ENCODE measurements at regions of chr20 and their contacts with region 1.

Region 1: DNA sequence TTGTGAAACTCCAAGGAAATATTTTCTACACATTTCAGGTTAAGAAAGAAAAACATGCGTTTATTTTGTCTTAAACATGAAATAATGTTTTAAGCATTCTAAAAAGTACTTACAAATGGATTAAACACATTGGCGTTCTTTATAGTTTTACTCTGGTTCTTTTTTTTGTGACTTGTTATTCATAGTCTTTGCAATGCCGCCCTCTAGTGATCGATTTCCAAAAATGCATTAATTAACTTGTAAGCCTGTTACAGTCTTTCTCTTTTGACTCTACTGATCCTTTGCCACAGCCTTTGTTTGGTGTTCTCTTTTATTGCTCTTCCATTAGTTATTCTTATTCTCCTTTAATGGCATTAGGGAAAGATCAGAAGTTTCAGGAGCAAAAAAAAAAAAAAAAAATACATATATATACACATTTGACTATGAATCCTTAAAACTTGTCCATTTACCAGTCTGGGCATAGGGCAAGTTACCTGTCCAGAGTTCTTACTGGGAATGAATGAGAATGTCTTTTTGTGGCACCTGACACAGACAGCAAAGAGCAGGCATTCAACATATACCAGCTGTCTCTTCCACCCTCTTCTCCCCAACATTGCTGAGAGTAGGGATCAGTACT is 59.9 kb downstream of the MACROD2 start:
- DNase-seq: no peak
- ATAC-seq: peak; percentile 76
- H3K4me3 ChIP-seq: no peak overlapping the region
- H3K27ac ChIP-seq: no peak overlapping the region
- H3K4me1 ChIP-seq: no peaks in the 10 kb centered on the region
- H3K27me3 ChIP-seq: no peaks in the 10 kb centered on the region

Region 2: DNA sequence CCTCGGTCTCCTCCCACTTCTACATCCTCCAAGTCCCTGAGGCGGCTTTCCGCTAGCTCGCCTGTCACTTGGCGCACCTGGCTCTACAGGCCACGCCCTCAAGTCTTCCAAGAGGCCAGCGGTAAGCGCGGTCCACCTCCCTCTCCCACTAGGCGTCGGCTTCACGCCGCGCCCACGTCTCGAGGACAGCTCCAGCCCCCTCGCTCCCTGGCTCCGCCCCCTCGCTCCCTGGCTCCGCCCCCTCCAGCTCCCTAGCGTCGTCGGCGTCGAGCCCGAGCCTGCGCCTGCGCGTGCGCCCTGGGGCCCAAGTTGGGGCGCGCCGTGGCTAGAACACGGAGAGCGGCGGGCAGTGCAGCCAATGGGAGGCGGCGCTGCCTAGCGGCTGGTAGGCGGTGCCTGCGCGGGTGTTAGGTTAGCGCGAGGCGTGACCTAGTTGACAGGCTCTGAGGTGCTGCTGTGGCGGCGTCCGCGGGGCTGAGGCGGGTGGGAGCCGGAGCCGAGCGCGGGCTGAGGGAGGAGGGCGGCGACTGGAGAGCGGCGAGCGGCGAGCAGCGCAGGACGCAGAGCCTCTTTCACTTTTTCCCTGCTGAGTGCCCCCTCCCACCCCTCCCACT is 60.0 kb before region 1 on chr20 and contains the start of gene MACROD2:
- intact Hi-C with region 1: loop called in 1 of 2 experiments (anchors 10 kb)
- DNase-seq: peak; percentile 92 to 99
- ATAC-seq: peak; percentile 98
- H3K4me3 ChIP-seq: peak within 1 kb of the TSS; percentile 70 to 83
- H3K27ac ChIP-seq: no peak within 1 kb of the TSS
- H3K4me1 ChIP-seq: no peaks in the 10 kb centered on the region
- H3K27me3 ChIP-seq: no peaks in the 10 kb centered on the region
- total RNA-seq, gene MACROD2: 6.2 to 11.2 TPM

Region 3: GRCh38 chr20:14098262-14098661 is 43.0 kb after region 1 on chr20:
- intact Hi-C with region 1: no loop called
- DNase-seq: no peak
- ATAC-seq: no peak
- H3K4me3 ChIP-seq: no peak overlapping the region
- H3K27ac ChIP-seq: no peak overlapping the region
- H3K4me1 ChIP-seq: no peaks in the 10 kb centered on the region
- H3K27me3 ChIP-seq: no peaks in the 10 kb centered on the region

Measured in aorta (tissue), 5 donors.